ENCODE measurements at regions of chr1 and their contacts with region 1.

Region 1: DNA sequence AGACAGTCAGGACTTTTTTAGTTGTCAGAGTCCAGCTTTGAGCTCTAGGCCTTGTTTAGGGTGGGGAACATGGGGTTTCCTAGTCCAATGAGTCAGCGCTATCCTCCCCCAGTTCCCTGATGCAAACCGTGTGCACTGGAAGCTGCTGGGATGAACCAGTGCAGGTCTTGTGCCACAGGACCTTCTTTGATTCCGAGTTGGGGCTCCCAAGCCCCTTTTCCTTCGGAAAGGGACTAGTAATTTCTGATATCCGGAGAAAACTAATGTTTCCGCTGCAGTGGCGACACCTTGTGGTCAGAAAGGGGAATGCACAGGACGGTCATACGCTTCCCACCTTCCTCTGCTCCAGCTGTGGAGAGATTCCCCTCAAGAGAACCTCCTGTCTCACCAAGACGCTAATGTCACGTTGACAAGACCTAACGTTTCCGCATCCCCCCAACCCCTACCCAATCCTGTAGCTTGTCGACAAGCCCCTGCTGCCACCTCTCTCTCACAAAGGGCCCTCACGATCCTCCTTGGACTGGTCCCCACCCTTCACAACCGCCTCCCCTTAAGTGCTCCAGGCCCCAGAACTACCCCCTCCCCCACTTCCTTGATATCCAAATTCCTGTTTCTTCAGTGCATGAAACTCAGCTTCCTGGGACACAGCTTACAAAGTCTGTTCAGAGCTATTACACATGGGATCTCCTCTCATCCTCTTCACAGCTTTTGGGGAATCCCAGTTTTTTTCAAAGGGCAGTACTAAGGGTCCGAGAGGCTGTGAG is 30.9 kb downstream of the GPA33 start:
- DNase-seq: peak; percentile 54
- H3K4me3 ChIP-seq: no peak overlapping the region
- H3K27ac ChIP-seq: no peak overlapping the region
- H3K4me1 ChIP-seq: peaks cover 3% of the 10 kb centered on the region
- H3K27me3 ChIP-seq: peaks cover 0 to 1% of the 10 kb centered on the region in 2 experiments
- CTCF ChIP-seq: peak; percentile 93 to 96
- POLR2A ChIP-seq: no peak

Region 2: GRCh38 chr1:165787741-165788140 is 1271.5 kb before region 1 on chr1:
- CTCF ChIA-PET with region 1: no interaction called
- POLR2A ChIA-PET with region 1: no interaction called
- dilution Hi-C with region 1: no loop called
- intact Hi-C with region 1: no loop called
- DNase-seq: no peak
- H3K4me3 ChIP-seq: no peak overlapping the region
- H3K27ac ChIP-seq: no peak overlapping the region
- H3K4me1 ChIP-seq: no peaks in the 10 kb centered on the region
- H3K27me3 ChIP-seq: no peaks in the 10 kb centered on the region
- CTCF ChIP-seq: no peak
- POLR2A ChIP-seq: no peak

Region 3: DNA sequence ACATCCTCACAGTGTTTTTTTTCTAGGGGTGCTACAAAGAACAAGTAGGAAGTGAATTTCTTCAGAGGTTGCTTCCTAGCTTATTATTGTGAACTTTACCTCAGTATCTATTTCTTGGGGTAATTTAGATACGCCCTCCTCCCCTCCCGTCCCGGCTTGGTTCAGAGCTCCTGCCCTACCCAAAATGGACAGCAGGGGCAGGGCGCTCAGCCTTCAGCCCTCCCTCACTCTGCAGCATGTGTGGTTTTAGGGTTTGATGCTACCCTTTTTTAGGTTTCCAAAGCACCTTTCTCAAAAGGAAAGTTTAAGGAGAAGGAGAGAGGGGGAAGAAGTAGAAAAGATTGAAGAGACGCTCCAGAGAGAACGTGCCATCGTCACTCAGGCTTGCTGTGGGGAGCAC is 236.8 kb before region 1 on chr1:
- CTCF ChIA-PET with region 1: no interaction called
- POLR2A ChIA-PET with region 1: no interaction called
- dilution Hi-C with region 1: no loop called
- intact Hi-C with region 1: loop called (anchors 5 kb)
- DNase-seq: no peak
- H3K4me3 ChIP-seq: no peak overlapping the region
- H3K27ac ChIP-seq: no peak overlapping the region
- H3K4me1 ChIP-seq: no peaks in the 10 kb centered on the region
- H3K27me3 ChIP-seq: peaks cover 0 to 2% of the 10 kb centered on the region in 2 experiments
- CTCF ChIP-seq: peak; percentile 22 to 38
- POLR2A ChIP-seq: no peak

Region 4: GRCh38 chr1:166884040-166884642 is 175.1 kb before region 1 on chr1:
- CTCF ChIA-PET with region 1: interaction called, 48 read pairs
- POLR2A ChIA-PET with region 1: no interaction called
- dilution Hi-C with region 1: no loop called
- intact Hi-C with region 1: loop called (anchors 1 kb)
- DNase-seq: peak; percentile 4
- H3K4me3 ChIP-seq: no peak overlapping the region
- H3K27ac ChIP-seq: no peak overlapping the region
- H3K4me1 ChIP-seq: no peaks in the 10 kb centered on the region
- H3K27me3 ChIP-seq: peaks cover 19 to 25% of the 10 kb centered on the region in 2 experiments
- CTCF ChIP-seq: peak; percentile 34 to 60
- POLR2A ChIP-seq: no peak

Region 5: DNA sequence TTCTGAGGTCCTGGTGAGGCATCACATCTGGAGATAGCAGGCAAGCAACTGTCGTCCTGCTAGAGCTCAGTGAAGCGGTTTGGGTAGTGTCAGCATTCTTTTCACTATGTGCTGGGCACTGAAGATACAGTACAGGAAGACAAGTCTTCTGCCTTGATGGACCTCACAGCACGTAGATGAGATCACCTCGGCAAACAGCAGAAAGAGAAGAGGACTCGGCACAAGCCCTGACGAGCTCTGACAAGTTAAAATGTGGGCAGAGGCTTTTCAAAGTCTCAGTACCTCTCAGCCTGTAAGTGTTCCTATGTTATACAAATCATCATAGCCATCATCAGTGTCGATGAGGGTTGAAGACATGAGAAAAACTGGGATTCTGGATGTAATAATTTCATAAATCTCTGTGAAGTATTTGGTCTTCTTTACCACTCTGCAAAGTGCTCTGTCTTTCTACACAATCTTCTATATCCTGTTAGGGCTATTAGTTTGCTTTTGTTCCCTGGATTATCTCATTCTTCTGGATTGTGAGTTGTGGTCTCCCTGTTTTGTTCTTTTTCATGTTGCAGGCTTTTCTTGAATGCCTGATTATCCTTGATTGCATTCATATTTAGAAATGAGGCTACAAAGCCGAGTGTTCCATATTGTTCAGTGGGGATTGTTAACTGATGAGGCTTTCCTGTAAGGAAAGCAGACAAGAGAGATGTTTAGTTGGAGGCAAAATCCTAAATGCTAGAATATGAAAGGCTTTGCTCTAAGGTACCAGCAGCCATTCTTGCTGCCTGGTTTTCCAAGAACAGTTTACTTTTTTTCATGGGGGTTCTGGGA is 45.9 kb before region 1 on chr1:
- CTCF ChIA-PET with region 1: no interaction called
- POLR2A ChIA-PET with region 1: no interaction called
- dilution Hi-C with region 1: no loop called
- intact Hi-C with region 1: no loop called
- DNase-seq: no peak
- H3K4me3 ChIP-seq: no peak overlapping the region
- H3K27ac ChIP-seq: no peak overlapping the region
- H3K4me1 ChIP-seq: no peaks in the 10 kb centered on the region
- H3K27me3 ChIP-seq: no peaks in the 10 kb centered on the region
- CTCF ChIP-seq: no peak
- POLR2A ChIP-seq: no peak

Region 6: GRCh38 chr1:167082511-167083027 is 23.3 kb after region 1 on chr1:
- CTCF ChIA-PET with region 1: interaction called, 12 read pairs
- POLR2A ChIA-PET with region 1: no interaction called
- dilution Hi-C with region 1: no loop called
- intact Hi-C with region 1: no loop called
- DNase-seq: no peak
- H3K4me3 ChIP-seq: no peak overlapping the region
- H3K27ac ChIP-seq: no peak overlapping the region
- H3K4me1 ChIP-seq: no peaks in the 10 kb centered on the region
- H3K27me3 ChIP-seq: peaks cover 0 to 2% of the 10 kb centered on the region in 2 experiments
- CTCF ChIP-seq: no peak
- POLR2A ChIP-seq: no peak

Measured in endothelial cell of umbilical vein (primary cell).